ENCODE measurements at regions of chr15 and their contacts with region 1.

Region 1: GRCh38 chr15:68875377-68876116 is 54.8 kb upstream of the SPESP1 start:
- DNase-seq: peak; percentile 88 to 97 (median 92)
- H3K4me3 ChIP-seq: peak overlapping the region in 1 of 4 donors; percentile 33
- H3K27ac ChIP-seq: no peak overlapping the region
- H3K4me1 ChIP-seq: no peaks in the 10 kb centered on the region
- H3K27me3 ChIP-seq: no peaks in the 10 kb centered on the region
- CTCF ChIP-seq: peak; percentile 85 to 97 (median 93)
- POLR2A ChIP-seq: no peak

Region 2: GRCh38 chr15:68550481-68551295 is 324.9 kb before region 1 on chr15:
- intact Hi-C with region 1: loop called (anchors 5 kb)
- DNase-seq: peak; percentile 62 to 90 (median 78)
- H3K4me3 ChIP-seq: no peak overlapping the region
- H3K27ac ChIP-seq: no peak overlapping the region
- H3K4me1 ChIP-seq: no peaks in the 10 kb centered on the region
- H3K27me3 ChIP-seq: peaks cover 5% of the 10 kb centered on the region
- CTCF ChIP-seq: peak; percentile 67 to 94 (median 79)
- POLR2A ChIP-seq: no peak

Region 3: DNA sequence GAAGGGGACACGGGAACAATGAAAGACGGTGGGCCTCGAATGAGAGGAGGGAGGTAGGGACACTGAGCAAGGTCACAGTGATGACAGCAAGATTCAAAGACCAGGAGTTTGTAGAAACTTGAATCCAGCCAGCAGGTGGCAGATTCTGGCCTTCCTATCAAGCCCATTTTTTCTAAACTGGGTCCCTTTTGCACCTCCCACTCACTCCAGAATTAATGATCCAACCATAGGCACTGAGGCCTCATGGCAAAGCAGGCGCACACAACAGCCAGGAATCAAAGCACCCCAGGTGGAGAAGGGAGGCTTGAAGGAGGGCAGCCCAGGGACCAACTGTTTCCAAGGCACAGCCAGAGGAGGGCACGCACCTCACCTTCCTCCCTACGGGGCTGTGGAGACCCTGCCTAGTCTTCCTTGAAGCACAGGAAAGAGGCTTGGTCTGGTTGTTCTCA is 145.1 kb before region 1 on chr15:
- intact Hi-C with region 1: loop called (anchors 2 to 5 kb)
- DNase-seq: peak in 6 of 7 donors; percentile 37 to 74 (median 52)
- H3K4me3 ChIP-seq: no peak overlapping the region
- H3K27ac ChIP-seq: no peak overlapping the region
- H3K4me1 ChIP-seq: peaks cover 5 to 7% of the 10 kb centered on the region in 2 donors
- H3K27me3 ChIP-seq: no peaks in the 10 kb centered on the region
- CTCF ChIP-seq: peak; percentile 42 to 77 (median 61)
- POLR2A ChIP-seq: no peak

Region 4: GRCh38 chr15:68783226-68784058 is 92.1 kb before region 1 on chr15:
- intact Hi-C with region 1: loop called in 1 of 2 experiments (anchors 5 kb)
- DNase-seq: peak in 3 of 7 donors; percentile 45 to 61 (median 56)
- H3K4me3 ChIP-seq: no peak overlapping the region
- H3K27ac ChIP-seq: peak overlapping the region in 1 of 5 donors; percentile 6
- H3K4me1 ChIP-seq: peaks cover 0 to 10% of the 10 kb centered on the region in 2 donors
- H3K27me3 ChIP-seq: no peaks in the 10 kb centered on the region
- CTCF ChIP-seq: peak; percentile 46 to 61 (median 55)
- POLR2A ChIP-seq: no peak

Measured in adrenal gland (tissue), 19 donors.